ENCODE measurements at regions of chr19 and their contacts with region 1.

Region 1: GRCh38 chr19:46614114-46614722 is 10.7 kb downstream of the PTGIR start:
- DNase-seq: peak; percentile 82
- CTCF ChIP-seq: peak; percentile 82

Region 2: DNA sequence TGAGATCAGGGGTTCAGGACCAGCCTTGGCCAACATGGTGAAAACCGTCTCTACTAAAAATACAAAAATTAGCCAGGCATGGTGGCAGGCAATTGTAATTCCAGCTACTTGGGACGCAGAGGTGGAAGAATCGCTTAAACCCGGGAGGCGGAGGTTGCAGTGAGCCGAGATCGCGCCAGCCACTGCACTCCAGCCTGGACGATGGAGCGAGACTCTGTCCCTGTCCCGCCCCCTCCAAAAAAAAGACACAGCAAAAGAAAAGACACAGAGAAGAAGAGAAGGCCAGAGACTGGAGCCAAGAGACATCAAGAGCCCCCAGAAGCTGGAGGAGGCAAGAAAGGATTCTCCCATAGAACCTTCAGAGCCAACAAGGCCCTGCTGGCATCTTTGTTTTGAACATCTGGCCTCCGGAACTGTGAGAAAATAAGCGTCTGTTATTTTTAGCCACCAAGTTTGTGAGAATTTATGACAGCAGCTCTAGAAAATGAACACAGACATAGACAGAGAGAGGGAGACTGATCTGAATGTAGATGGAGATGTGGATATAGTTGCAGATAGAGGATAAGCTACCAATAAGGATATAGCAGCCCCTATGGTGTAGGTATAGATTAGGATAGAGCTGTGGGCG is 92.9 kb before region 1 on chr19:
- CTCF ChIA-PET with region 1: no interaction called
- POLR2A ChIA-PET with region 1: no interaction called
- DNase-seq: no peak
- CTCF ChIP-seq: no peak

Region 3: DNA sequence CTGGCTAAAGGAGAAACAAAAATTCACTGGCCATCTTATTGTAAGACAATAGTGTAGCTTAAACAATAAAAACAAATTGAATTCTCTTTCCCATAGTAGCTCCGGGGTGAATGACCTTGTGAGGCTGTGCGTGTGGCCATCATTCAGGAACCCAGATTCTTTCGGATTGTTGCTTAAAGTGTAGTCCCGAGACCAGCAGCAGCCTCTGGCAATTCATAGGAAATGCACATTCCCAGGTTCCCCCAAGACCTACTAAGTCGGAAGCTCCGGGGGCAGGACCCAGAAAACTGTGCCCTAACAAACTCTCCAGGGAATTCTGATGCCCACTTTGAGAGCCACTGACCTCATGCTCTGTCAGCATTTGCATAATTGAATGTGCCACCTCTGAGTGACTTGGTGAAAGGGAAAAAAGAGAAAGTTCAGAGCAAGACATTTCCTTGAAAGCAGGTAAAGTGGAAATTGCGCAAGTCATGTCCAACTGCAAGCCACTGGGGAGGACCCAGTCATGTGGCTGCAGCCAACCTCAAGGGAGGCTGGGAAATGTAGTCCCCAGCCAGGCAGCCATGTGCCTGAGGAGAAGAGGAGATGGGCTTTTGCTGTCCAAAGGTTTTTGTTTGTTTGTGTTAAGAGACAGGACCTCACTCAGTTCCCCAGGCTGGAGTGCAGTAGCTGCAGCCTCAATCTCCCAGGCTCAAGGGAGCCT is 67.9 kb before region 1 on chr19:
- CTCF ChIA-PET with region 1: no interaction called
- POLR2A ChIA-PET with region 1: no interaction called
- DNase-seq: peak; percentile 46
- CTCF ChIP-seq: no peak

Region 4: GRCh38 chr19:46600384-46601317 is 13.6 kb before region 1 on chr19:
- CTCF ChIA-PET with region 1: interaction called, 68 read pairs
- POLR2A ChIA-PET with region 1: interaction called, 3 read pairs
- DNase-seq: peak; percentile 94
- CTCF ChIP-seq: no peak

Region 5: GRCh38 chr19:46624958-46625661 is 10.9 kb after region 1 on chr19 and contains the start of gene PTGIR:
- CTCF ChIA-PET with region 1: interaction called, 76 read pairs
- POLR2A ChIA-PET with region 1: interaction called, 3 read pairs
- DNase-seq: no peak
- CTCF ChIP-seq: no peak

Region 6: GRCh38 chr19:46634045-46634655 is 19.9 kb after region 1 on chr19:
- CTCF ChIA-PET with region 1: interaction called, 76 read pairs
- POLR2A ChIA-PET with region 1: interaction called, 3 read pairs
- DNase-seq: peak; percentile 95
- CTCF ChIP-seq: no peak

Region 7: GRCh38 chr19:46721645-46722371 is 107.6 kb after region 1 on chr19:
- CTCF ChIA-PET with region 1: no interaction called
- POLR2A ChIA-PET with region 1: no interaction called
- DNase-seq: no peak
- CTCF ChIP-seq: peak; percentile 10

Measured in GM10248 (cell line).